ENCODE measurements at regions of chr5 and their contacts with region 1.

Region 1: DNA sequence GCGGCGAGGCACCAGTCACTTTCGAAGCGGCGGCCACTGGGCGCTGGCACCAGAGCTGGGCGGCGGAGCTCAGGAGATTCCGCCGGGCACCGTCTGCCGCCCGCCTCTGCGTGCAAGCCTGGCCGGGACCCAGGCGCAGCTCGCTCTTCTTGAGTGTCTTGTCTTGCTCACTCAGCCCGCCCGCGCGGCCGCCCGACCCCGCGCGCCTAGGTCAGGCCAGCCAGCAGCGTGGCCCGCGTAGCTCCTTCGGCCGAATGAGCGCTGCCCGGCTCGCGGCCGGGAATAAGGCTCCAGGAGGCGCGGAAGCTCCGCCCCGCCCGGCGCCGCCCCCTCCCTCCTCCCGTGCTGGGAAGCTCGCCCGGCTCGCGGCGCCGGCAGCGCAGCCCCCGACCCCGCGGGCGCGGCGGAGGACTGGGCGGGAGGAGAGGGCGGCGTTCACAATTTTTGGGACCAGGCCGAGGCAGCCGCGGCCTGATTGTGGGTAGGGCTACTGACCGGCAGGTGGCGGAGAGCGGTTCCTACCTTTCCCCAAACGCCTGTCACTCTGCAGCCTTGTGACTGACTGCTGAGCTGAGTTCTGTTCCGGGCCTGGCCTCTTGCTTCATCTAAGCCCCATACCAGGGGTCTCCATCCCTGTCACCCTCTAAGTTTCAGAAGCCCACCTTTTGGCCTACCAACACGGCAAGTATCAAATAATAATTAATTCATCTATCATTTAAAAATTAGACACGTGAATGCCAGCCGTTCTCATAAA is at the start of gene HBEGF:
- DNase-seq: peak; percentile 89
- H3K4me3 ChIP-seq: peak within 1 kb of the TSS; percentile 75 to 83 (median 81)
- H3K27ac ChIP-seq: peak within 1 kb of the TSS; percentile 90
- H3K4me1 ChIP-seq: peaks cover 65% of the 10 kb centered on the region
- H3K27me3 ChIP-seq: no peaks in the 10 kb centered on the region
- CTCF ChIP-seq: peak; percentile 46 to 69
- total RNA-seq, gene HBEGF: 32.5 to 116 TPM

Region 2: GRCh38 chr5:140235791-140236551 is 110.6 kb before region 1 on chr5:
- CTCF ChIA-PET with region 1: interaction called, 21 read pairs
- dilution Hi-C with region 1: no loop called
- in situ Hi-C with region 1: no loop called
- intact Hi-C with region 1: no loop called
- DNase-seq: peak; percentile 82
- H3K4me3 ChIP-seq: no peak overlapping the region
- H3K27ac ChIP-seq: no peak overlapping the region
- H3K4me1 ChIP-seq: peaks cover 37% of the 10 kb centered on the region
- H3K27me3 ChIP-seq: no peaks in the 10 kb centered on the region
- CTCF ChIP-seq: no peak

Region 3: GRCh38 chr5:140244525-140245025 is 102.0 kb before region 1 on chr5:
- CTCF ChIA-PET with region 1: interaction called, 18 read pairs
- dilution Hi-C with region 1: no loop called
- in situ Hi-C with region 1: no loop called
- intact Hi-C with region 1: loop called (anchors 1 kb)
- DNase-seq: peak; percentile 73
- H3K4me3 ChIP-seq: no peak overlapping the region
- H3K27ac ChIP-seq: no peak overlapping the region
- H3K4me1 ChIP-seq: peaks cover 42% of the 10 kb centered on the region
- H3K27me3 ChIP-seq: no peaks in the 10 kb centered on the region
- CTCF ChIP-seq: peak; percentile 62 to 84

Region 4: DNA sequence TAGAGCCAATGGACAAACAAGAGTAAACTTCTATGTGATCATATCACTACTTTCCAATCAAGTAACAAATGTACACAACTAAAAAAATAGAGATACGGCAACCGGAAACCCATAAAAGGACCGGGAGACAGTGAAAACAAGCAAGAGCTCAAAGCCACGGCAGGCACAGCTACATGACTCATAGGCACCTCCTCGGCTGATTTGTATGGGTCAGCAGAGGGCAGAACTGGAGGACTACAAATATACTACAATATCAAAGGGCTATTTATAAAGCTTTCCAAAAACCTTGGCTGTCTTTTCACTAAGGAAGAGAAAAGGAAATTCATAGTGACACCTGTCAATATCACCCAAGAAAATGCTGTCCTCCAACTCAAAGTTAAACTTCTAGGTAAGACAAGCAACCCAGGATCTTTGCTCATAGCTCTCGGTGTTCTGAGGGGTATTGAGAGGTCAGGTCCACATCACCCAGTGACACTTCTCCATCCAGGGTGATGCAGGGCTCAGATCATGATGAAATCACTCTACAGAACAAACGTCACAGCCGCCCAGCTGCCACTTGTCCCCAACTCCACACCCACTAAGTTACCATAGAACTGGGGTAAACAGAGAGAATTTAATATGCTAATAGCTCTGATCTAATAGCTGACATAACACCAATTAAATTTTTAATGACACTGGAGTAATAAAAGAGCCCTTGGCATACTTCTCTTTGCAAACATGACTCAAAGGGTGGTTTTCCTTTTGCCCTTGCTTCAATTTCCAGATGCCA is 84.9 kb before region 1 on chr5:
- CTCF ChIA-PET with region 1: no interaction called
- dilution Hi-C with region 1: loop called (anchors 5 kb)
- in situ Hi-C with region 1: no loop called
- intact Hi-C with region 1: loop called (anchors 1 kb)
- DNase-seq: peak; percentile 80
- H3K4me3 ChIP-seq: no peak overlapping the region
- H3K27ac ChIP-seq: peak overlapping the region; percentile 99
- H3K4me1 ChIP-seq: peaks cover 48% of the 10 kb centered on the region
- H3K27me3 ChIP-seq: no peaks in the 10 kb centered on the region
- CTCF ChIP-seq: peak in 1 of 2 donors; percentile 19

Region 5: DNA sequence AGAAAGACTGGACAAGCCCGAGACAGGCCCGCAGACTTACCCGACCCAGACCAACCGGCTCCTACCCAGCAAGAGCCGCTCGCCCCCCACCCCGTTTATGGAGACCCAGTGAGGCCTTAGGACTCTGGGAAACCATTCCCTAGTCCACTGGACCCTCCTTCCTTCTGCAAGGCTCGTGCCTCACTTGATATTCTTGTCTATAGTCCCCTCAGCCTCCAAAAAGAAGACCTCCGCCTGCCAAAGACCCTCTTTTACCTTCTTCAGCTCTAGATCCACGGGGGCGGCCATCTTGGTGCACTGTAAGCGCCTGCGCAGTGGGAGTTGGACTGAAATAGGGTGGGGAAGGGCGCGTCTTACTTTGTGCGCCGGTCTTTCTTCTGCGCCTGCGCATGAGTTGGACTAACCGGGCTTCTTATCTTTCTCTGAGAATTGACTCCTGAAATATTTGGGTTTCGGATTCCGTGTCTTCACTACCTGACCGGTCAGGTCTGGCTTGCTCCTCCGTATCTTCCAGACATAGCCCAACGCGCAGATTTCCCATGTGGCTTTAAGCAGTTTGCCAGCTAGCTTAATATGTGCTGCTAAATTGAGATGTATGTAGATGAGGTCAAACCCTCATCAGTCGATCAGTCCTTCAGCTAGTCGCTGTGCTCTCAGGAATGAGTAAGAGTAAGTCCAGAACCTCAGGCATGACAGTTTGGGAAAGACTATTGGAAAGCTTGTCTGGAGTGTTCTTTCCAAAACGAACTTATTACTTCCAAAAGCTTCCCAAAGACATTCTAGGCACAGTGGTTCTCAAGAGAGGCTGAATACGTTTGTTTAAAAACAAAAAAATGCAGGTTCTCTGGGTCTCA is 43.5 kb before region 1 on chr5 and contains the start of gene PFDN1:
- CTCF ChIA-PET with region 1: no interaction called
- dilution Hi-C with region 1: no loop called
- in situ Hi-C with region 1: no loop called
- intact Hi-C with region 1: loop called (anchors 2 kb)
- DNase-seq: peak; percentile 92
- H3K4me3 ChIP-seq: peak within 1 kb of the TSS; percentile 89 to 91 (median 91)
- H3K27ac ChIP-seq: peak within 1 kb of the TSS; percentile 91
- H3K4me1 ChIP-seq: peaks cover 21% of the 10 kb centered on the region
- H3K27me3 ChIP-seq: no peaks in the 10 kb centered on the region
- CTCF ChIP-seq: no peak
- total RNA-seq, gene PFDN1: 64.0 to 65.0 TPM

Region 6: DNA sequence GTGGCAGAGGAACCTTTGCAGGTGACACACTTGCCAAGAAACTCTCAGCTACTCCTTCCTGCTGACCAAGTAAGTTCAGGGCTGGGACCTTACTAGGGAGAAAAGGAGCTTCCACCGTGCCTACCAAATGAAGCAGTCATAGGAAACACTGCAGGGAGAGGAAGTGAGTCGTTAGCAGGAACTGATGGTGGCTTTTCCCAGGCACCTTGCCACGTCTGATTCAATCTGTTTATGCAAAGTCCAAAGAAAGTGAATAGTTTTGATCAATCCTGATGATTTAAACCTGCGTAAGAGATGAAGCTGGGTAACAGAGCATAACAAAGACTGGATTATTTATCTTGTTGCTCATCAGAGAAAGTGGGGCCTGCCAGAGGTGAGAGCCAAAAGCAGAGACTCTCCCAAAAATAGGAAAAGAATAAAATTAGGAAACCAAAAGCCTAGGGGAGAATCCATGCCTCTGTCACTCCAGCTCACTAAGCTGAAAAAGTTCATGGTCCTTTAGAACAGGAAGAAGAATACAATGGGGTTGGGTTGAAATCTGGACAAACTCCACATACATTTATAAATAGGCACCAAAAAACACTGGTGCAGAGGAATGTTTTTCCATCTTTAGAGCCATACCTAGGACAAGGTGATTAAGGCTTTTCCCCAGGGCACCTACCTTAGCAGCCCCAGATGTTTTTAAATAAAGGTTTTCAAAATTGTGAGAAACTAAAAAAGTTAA is 34.3 kb before region 1 on chr5:
- CTCF ChIA-PET with region 1: no interaction called
- dilution Hi-C with region 1: loop called (anchors 5 kb)
- in situ Hi-C with region 1: no loop called
- intact Hi-C with region 1: no loop called
- DNase-seq: peak; percentile 98
- H3K4me3 ChIP-seq: no peak overlapping the region
- H3K27ac ChIP-seq: peak overlapping the region; percentile 94
- H3K4me1 ChIP-seq: peaks cover 27% of the 10 kb centered on the region
- H3K27me3 ChIP-seq: no peaks in the 10 kb centered on the region
- CTCF ChIP-seq: no peak

Region 7: DNA sequence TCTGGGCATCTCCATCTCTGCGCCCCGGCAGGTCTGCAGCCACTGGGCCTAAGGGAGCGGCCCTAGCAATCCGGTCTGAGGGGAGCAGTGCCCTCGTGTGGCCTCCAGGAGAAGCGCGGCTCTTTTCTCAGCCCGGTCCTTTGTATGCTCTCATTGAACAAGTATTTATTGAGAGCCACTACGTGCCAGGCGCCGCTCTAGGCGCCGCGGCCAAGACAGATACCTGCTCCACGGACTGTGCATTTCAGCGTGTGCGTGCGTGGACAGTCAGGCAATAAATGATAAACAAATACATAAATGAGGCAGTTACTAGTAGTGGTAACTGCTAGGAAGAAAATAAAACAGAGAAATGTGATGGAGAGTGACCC is 11.2 kb after region 1 on chr5:
- CTCF ChIA-PET with region 1: no interaction called
- dilution Hi-C with region 1: no loop called
- in situ Hi-C with region 1: no loop called
- intact Hi-C with region 1: loop called (anchors 1 kb)
- DNase-seq: peak; percentile 77
- H3K4me3 ChIP-seq: no peak overlapping the region
- H3K27ac ChIP-seq: peak overlapping the region; percentile 4
- H3K4me1 ChIP-seq: peaks cover 4% of the 10 kb centered on the region
- H3K27me3 ChIP-seq: no peaks in the 10 kb centered on the region
- CTCF ChIP-seq: peak; percentile 81 to 93

Measured in mammary epithelial cell (primary cell).